AG04449 (cell line): ENCODE measurements at regions of chr12 and their contacts with region 1.

Region 1: DNA sequence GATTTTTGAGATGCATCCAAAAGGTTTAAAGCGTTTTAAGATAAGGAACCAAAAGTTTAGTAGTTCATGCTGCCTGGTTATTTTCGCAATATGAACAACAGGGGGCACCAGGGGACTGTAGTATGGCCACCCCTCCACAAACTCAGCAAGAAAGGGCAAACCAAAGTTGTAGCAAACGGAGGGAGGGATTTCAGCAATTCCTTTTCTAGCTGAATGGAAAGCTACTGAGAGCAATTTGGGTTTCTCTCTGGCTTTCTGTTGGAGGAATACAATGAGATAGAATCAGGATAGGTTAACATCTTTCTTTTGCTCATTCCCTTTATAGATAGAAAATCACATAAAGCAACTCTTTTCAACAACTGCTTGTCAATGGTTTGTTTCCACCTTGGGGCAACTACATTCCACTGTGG is 62.5 kb downstream of the DRAM1 start:
- DNase-seq: peak; percentile 41
- H3K4me3 ChIP-seq: no peak overlapping the region
- CTCF ChIP-seq: peak; percentile 75

Region 2: DNA sequence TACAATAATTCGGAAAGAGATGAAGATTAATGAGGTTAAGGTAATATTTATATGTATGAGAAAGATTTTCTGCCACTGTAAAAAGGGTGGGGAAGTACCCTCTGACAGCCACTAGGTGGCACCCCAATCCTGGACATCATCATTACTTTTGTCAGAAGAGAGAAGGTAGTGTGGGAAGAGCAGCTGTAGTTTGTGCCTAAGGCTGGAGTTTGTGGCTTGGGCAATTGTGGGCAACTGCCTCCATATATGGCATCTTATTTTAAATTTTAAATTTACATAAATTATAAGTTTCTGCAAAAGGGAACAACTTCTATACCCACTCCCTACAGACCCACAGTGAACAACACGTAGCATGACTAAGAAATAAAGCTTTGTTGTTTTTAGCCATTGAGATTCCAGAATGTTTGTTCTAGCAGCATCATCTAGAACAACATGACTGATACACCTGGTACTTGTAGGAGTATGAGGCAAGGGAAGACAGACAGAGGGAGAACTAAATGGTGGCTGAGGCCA is 166.2 kb before region 1 on chr12:
- CTCF ChIA-PET with region 1: interaction called, 13 read pairs
- POLR2A ChIA-PET with region 1: no interaction called
- DNase-seq: peak; percentile 16
- H3K4me3 ChIP-seq: no peak overlapping the region
- CTCF ChIP-seq: peak; percentile 79

Region 3: GRCh38 chr12:101792051-101792931 is 147.6 kb before region 1 on chr12:
- CTCF ChIA-PET with region 1: no interaction called
- POLR2A ChIA-PET with region 1: no interaction called
- DNase-seq: no peak
- H3K4me3 ChIP-seq: no peak overlapping the region
- CTCF ChIP-seq: no peak

Region 4: GRCh38 chr12:101906226-101906625 is 33.6 kb before region 1 on chr12:
- CTCF ChIA-PET with region 1: no interaction called
- POLR2A ChIA-PET with region 1: no interaction called
- DNase-seq: no peak
- H3K4me3 ChIP-seq: no peak overlapping the region
- CTCF ChIP-seq: no peak

Region 5: DNA sequence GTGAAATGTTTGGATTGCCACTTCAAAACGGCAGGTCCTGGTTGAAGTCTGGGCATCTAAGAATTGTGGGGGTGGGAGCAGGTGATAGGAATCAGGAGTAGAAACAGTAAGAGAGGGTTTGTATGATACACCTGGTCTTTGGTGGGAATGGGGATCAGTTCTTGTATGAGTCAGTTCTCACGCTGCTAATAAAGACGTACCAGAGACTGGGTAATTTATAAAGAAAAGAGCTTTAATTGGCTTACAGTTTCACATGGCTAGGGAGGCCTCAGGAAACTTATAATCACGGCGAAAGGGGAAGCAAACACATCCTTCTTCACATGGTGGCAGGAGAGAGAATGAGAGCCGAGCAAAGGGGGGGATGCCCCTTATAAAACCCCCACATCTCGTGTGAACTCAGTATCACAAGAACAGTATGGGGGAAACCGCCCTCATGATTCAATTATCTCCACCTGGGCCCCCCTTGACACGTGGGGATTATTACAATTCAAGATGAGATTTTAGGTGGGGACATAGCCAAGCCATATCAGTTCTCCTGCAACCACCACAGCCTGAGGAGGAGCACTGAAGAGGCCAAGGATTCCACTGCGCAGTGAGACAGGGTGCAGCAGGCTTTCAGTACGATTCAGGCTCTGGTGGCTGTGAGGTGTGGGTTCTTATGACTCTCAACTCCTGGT is 10.4 kb before region 1 on chr12:
- CTCF ChIA-PET with region 1: interaction called, 12 read pairs
- POLR2A ChIA-PET with region 1: interaction called, 3 read pairs
- DNase-seq: no peak
- H3K4me3 ChIP-seq: no peak overlapping the region
- CTCF ChIP-seq: no peak

Region 6: GRCh38 chr12:101951002-101951670 is 11.3 kb after region 1 on chr12:
- CTCF ChIA-PET with region 1: interaction called, 24 read pairs
- POLR2A ChIA-PET with region 1: no interaction called
- DNase-seq: no peak
- H3K4me3 ChIP-seq: no peak overlapping the region
- CTCF ChIP-seq: no peak

Region 7: GRCh38 chr12:101957252-101957978 is 17.6 kb after region 1 on chr12:
- CTCF ChIA-PET with region 1: interaction called, 21 read pairs
- POLR2A ChIA-PET with region 1: no interaction called
- DNase-seq: no peak
- H3K4me3 ChIP-seq: no peak overlapping the region
- CTCF ChIP-seq: no peak

Region 8: GRCh38 chr12:102740141-102740955 is 800.5 kb after region 1 on chr12:
- CTCF ChIA-PET with region 1: interaction called, 22 read pairs
- POLR2A ChIA-PET with region 1: no interaction called
- DNase-seq: peak; percentile 16
- H3K4me3 ChIP-seq: no peak overlapping the region
- CTCF ChIP-seq: peak; percentile 7

Region 9: DNA sequence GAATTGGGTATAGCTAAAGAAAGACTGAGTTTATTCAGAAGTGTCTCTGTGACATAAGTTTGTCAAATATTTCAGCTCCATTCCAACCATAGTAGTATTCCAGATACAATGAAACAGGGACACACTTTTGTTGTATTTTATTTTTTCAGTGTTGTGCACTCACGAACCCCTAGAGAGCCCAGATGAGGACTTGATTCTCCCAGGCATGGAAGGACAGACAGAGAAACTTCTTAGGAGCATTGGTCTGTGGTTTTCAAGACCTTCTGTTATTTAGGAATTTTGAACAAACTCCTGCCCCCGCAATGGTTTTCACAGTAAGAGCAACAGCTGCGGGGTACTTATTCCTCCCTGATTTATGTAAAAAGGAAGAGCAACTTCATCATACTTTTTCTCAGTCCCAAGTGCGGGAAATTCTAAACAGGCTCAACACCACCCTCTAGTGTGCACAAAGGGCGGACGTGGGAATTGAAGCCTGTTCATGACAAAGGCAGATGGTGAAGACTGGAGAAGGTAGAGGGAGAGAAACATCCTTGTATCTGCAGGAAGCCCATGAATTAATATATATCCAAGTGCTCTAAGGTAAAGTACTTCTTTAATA is 829.6 kb after region 1 on chr12:
- CTCF ChIA-PET with region 1: interaction called, 11 read pairs
- POLR2A ChIA-PET with region 1: no interaction called
- DNase-seq: peak; percentile 4
- H3K4me3 ChIP-seq: no peak overlapping the region
- CTCF ChIP-seq: peak; percentile 83